HepG2 (cell line): ENCODE measurements at regions of chr1 and their contacts with region 1.

Region 1: DNA sequence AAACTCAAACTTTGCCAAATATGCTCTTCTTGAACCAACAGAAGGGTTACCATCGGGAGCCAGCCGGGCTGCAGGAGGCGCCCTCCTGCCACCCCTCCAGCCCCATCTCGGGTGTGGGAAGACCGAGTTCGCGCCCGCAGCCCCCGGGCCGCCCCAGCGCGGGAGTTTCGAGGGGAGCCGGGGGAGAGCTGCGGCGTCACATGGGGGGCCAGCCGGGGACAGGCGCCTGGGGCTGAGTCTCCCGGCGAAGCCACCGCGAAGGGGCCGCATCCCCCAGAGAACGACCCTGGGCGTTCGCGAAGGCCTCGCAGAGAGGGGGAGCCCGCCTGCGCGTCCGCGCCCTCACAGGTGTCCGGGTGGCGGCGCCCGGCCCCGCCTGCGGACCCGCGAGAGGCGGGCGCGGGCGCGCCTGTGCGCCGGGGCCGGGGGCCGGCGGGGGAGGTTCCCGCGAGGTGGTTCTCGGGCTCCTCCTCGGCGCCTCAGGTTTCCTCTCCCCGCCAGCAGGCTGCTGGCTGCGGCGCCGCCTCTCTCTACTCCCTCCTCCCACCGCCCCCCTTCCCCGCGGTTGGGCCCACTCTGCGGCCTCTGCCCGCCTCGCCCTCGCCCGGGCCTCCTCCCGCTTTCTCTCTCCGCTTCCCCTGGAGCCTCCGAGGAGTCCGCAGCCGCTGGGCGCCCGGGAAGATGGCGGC is at the start of gene RAVER2:
- DNase-seq: peak; percentile 34
- ATAC-seq: peak; percentile 89
- H3K4me3 ChIP-seq: peak within 1 kb of the TSS; percentile 73 to 92 (median 88)
- H3K27ac ChIP-seq: peak within 1 kb of the TSS; percentile 75
- H3K4me1 ChIP-seq: peaks cover 27% of the 10 kb centered on the region
- H3K27me3 ChIP-seq: no peaks in the 10 kb centered on the region
- CTCF ChIP-seq: peak; percentile 71
- EP300 ChIP-seq: no peak
- POLR2A ChIP-seq: peak; percentile 44 to 47; a peak in 3 of 4 replicates
- RAD21 ChIP-seq: peak; percentile 57
- total RNA-seq, gene RAVER2: 15.4 and 20.2 TPM in 2 replicates

Region 2: DNA sequence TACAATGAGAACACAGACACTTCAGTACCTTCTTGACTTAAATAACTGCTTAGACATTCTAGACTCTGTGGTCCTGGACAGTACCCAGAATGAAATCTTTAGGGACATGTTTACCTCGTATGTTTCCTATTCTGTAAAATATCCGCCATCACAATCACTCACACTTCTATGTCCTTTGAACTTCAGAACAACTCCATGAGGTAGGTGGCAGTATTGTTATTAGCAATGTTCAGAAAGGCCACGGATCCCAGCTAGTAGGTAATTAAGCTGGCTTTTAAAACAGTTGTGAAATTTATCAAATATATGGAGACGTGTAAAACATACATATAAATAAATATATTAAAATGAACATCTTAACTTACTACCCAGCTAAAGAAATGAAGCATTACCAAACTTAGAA is 191.4 kb before region 1 on chr1:
- CTCF ChIA-PET with region 1: no interaction called
- POLR2A ChIA-PET with region 1: no interaction called
- in situ Hi-C with region 1: no loop called
- intact Hi-C with region 1: no loop called
- DNase-seq: peak; percentile 5
- ATAC-seq: no peak
- H3K4me3 ChIP-seq: no peak overlapping the region
- H3K27ac ChIP-seq: no peak overlapping the region
- H3K4me1 ChIP-seq: no peaks in the 10 kb centered on the region
- H3K27me3 ChIP-seq: peaks cover 0 to 6% of the 10 kb centered on the region in 2 experiments; a peak in 2 of 5 replicates
- CTCF ChIP-seq: peak; percentile 30
- EP300 ChIP-seq: no peak
- POLR2A ChIP-seq: no peak
- RAD21 ChIP-seq: no peak

Region 3: DNA sequence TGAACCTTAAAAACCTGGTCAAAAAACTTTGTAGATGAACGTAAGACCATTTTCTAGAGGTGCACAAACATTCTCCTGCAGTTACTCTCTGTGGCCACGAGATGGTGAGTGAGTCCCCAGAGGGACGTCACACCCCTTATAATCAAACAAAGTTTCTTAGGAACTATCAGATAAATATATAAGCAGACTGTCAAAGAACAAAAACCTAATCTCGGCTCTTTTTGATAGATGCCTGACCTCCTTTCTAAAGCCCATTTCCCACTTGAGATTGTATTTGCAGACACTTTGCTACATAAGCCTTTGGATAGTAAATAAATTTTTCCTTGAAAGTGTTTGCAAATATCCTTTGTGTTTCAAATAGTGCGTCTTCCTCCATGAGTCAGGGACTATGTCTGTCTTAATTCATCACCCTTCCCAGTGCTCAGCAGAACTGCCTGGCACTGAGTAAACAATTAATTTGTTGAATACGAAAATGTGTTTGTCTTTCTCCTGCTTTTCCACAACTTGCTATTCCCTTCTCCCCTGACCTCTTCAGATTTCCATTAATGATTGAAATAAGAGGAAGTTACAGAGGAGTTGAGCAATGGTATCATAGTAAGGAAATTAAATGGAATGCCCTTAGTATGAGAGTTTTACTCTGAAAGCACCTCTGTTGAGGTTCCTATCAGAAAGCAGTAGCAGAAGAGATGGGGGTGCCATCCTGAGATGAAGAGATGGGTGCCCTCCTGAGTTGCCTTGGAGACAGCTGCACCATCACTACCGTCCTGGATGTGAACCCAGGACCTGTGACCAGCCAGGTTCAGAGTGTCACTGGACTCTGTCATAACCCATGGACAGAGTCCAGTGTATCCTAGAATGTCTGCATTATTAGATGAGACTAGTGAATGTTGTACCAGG is 57.6 kb before region 1 on chr1:
- CTCF ChIA-PET with region 1: no interaction called
- POLR2A ChIA-PET with region 1: no interaction called
- in situ Hi-C with region 1: no loop called
- intact Hi-C with region 1: loop called (anchors 1 kb)
- DNase-seq: peak; percentile 37
- ATAC-seq: peak; percentile 79
- H3K4me3 ChIP-seq: no peak overlapping the region
- H3K27ac ChIP-seq: no peak overlapping the region
- H3K4me1 ChIP-seq: no peaks in the 10 kb centered on the region
- H3K27me3 ChIP-seq: peaks cover 0 to 8% of the 10 kb centered on the region in 2 experiments; a peak in 2 of 5 replicates
- CTCF ChIP-seq: peak; percentile 69
- EP300 ChIP-seq: no peak
- POLR2A ChIP-seq: no peak
- RAD21 ChIP-seq: peak; percentile 41

Region 4: GRCh38 chr1:64775113-64775512 is 30.5 kb after region 1 on chr1:
- CTCF ChIA-PET with region 1: no interaction called
- POLR2A ChIA-PET with region 1: no interaction called
- in situ Hi-C with region 1: no loop called
- intact Hi-C with region 1: loop called (anchors 1 kb)
- DNase-seq: no peak
- ATAC-seq: no peak
- H3K4me3 ChIP-seq: no peak overlapping the region
- H3K27ac ChIP-seq: no peak overlapping the region
- H3K4me1 ChIP-seq: no peaks in the 10 kb centered on the region
- H3K27me3 ChIP-seq: no peaks in the 10 kb centered on the region
- CTCF ChIP-seq: no peak
- EP300 ChIP-seq: no peak
- POLR2A ChIP-seq: no peak
- RAD21 ChIP-seq: no peak

Region 5: GRCh38 chr1:64811131-64811530 is 66.5 kb after region 1 on chr1:
- CTCF ChIA-PET with region 1: no interaction called
- POLR2A ChIA-PET with region 1: no interaction called
- in situ Hi-C with region 1: loop called (anchors 10 kb)
- intact Hi-C with region 1: no loop called
- DNase-seq: no peak
- ATAC-seq: no peak
- H3K4me3 ChIP-seq: no peak overlapping the region
- H3K27ac ChIP-seq: no peak overlapping the region
- H3K4me1 ChIP-seq: no peaks in the 10 kb centered on the region
- H3K27me3 ChIP-seq: no peaks in the 10 kb centered on the region
- CTCF ChIP-seq: no peak
- EP300 ChIP-seq: no peak
- POLR2A ChIP-seq: no peak
- RAD21 ChIP-seq: no peak

Region 6: GRCh38 chr1:64823691-64824476 is 79.2 kb after region 1 on chr1:
- CTCF ChIA-PET with region 1: interaction called, 5 read pairs
- POLR2A ChIA-PET with region 1: no interaction called
- in situ Hi-C with region 1: loop called (anchors 10 kb)
- intact Hi-C with region 1: loop called (anchors 1 kb)
- DNase-seq: peak; percentile 69
- ATAC-seq: peak; percentile 65
- H3K4me3 ChIP-seq: no peak overlapping the region
- H3K27ac ChIP-seq: no peak overlapping the region
- H3K4me1 ChIP-seq: peaks cover 9% of the 10 kb centered on the region
- H3K27me3 ChIP-seq: no peaks in the 10 kb centered on the region
- CTCF ChIP-seq: peak; percentile 89
- EP300 ChIP-seq: no peak
- POLR2A ChIP-seq: no peak
- RAD21 ChIP-seq: peak; percentile 81